ENCODE measurements at regions of chr3 and their contacts with region 1.

Region 1: DNA sequence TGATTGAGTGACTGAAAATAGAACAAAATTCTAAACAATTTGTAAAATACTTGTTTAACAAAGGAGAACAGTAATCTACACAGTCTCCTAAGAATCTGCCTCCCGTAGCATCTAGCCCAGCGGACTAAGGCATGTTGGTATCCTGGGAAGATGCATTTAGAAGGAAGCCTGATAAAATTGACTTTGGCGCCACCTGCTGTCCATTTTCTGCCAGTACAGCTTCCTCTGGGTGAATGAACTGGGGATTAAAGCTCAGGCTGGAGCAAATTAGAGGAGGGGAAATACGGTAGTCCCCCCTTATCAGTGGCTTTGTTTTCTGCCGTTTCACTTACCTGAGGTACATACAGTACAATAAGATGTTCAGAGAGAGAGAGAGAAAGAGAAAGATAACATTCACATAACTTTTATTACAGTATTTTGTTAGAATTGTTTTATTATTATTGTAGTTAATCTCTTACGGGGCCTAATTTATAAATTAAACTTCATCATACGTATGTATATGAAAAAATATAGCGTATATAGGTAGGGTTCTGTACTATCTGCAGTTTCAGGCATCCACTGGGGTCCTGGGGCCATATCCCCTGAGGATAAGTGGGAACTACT is 191.6 kb downstream of the GAP43 start:
- DNase-seq: peak in 1 of 2 donors; percentile 86
- H3K4me3 ChIP-seq: no peak overlapping the region
- H3K27ac ChIP-seq: no peak overlapping the region
- H3K4me1 ChIP-seq: no peaks in the 10 kb centered on the region
- H3K27me3 ChIP-seq: no peaks in the 10 kb centered on the region
- CTCF ChIP-seq: peak; percentile 63 to 92 (median 89)

Region 2: DNA sequence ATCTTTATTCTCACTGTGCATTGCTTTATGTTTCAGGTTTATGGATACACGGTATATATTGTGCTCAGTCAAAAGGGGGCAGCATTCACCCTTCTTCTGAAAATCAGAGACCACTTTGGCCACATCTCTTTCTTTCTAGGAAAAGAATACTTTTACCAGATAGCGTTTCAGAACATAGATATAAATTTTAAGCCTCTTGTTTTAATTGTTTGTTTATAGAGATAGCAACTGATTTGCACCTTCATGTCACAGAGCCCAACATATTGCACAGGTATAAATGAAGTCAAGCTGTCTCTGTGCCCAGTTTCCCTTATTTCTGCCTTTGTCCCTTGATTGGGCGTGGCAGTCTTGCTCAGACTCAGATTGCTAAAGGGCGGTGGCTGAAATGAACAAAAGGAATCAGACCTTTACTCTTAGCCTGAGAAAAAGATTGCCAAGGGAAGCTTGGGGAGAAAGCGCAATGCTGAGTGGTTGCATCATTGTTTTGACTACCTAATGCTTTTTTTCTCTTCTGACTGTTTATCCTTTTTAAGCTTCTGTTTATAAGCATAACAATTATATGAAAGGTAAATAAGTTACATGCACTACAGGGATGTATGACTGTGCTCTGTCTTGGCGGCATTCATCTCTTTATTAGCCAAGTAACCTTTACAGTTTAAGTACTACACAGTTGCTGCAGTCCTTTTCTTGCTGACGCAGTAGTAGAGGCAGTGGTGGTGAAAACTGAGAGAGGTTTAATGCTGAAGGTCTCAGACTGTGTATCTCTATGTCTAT is 597.0 kb before region 1 on chr3:
- intact Hi-C with region 1: loop called (anchors 2 kb)
- DNase-seq: no peak
- H3K4me3 ChIP-seq: peak overlapping the region in 1 of 2 donors; percentile 28
- H3K27ac ChIP-seq: no peak overlapping the region
- H3K4me1 ChIP-seq: peaks cover 2 to 4% of the 10 kb centered on the region in 2 donors
- H3K27me3 ChIP-seq: no peaks in the 10 kb centered on the region
- CTCF ChIP-seq: peak; percentile 56 to 74 (median 62)